ENCODE measurements at regions of chr9 and their contacts with region 1.

Region 1: GRCh38 chr9:21789541-21790037 is 12.8 kb upstream of the MTAP start:
- DNase-seq: peak; percentile 74
- H3K4me3 Mint-ChIP-seq: peak overlapping the region; percentile 65
- H3K27ac Mint-ChIP-seq: peak overlapping the region; percentile 75
- H3K4me1 Mint-ChIP-seq: no peaks in the 10 kb centered on the region
- H3K27me3 Mint-ChIP-seq: peaks cover 7% of the 10 kb centered on the region

Region 2: GRCh38 chr9:21210311-21210710 is 579.3 kb before region 1 on chr9:
- CTCF ChIA-PET with region 1: no interaction called
- intact Hi-C with region 1: loop called (anchors 1 kb)
- DNase-seq: no peak
- H3K4me3 Mint-ChIP-seq: no peak overlapping the region
- H3K27ac Mint-ChIP-seq: no peak overlapping the region
- H3K4me1 Mint-ChIP-seq: peaks cover 7% of the 10 kb centered on the region
- H3K27me3 Mint-ChIP-seq: peaks cover 5% of the 10 kb centered on the region

Region 3: DNA sequence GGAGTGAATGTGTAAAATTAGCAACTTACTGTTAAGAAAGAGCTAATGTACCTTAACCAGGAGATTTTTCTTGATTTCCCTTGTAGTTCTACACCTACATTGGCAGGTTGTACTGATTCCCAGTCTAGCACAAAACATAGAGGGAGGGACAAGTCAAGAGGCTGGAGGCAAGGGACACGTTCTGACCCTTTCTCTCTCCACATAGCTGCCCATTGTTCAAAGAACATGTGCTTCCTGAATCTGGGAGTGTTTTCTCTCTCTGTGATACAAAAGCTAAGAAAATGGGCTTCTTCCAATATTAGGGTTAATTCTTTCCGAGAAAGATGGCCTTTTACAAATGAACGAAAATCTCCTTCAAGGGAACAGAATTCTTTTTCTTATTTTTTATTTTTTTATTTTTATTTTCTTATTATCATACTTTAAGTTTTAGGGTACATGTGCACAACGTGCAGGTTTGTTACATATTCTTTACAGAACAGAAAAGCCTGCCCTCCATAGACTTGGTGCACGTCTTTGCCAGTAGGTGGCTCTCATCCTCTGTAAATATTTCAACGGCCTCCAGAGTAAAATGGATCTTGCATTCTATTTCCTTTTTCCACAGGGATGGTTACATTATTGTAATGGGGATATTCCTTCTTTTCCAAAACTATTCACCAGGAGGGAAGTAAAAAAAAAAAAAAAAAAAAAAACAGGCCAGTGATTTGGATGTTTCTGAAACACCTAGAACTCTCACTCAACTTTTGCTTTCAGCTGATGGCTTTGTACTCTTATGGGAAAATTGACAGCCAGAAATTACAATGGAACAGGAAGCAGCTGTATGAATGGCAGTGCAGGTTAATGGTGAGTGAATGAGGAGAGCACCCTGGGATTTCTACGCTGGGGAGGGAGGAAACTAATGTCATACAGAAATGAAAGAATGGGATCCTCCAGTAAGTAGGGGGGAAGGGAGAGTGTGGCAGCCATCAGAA is 471.3 kb before region 1 on chr9:
- CTCF ChIA-PET with region 1: interaction called, 3 read pairs
- intact Hi-C with region 1: loop called (anchors 1 kb)
- DNase-seq: peak; percentile 61
- H3K4me3 Mint-ChIP-seq: no peak overlapping the region
- H3K27ac Mint-ChIP-seq: no peak overlapping the region
- H3K4me1 Mint-ChIP-seq: peaks cover 4% of the 10 kb centered on the region
- H3K27me3 Mint-ChIP-seq: no peaks in the 10 kb centered on the region

Region 4: GRCh38 chr9:21434202-21435014 is 355.2 kb before region 1 on chr9:
- CTCF ChIA-PET with region 1: interaction called, 13 read pairs
- intact Hi-C with region 1: loop called (anchors 1 kb)
- DNase-seq: peak; percentile 72
- H3K4me3 Mint-ChIP-seq: no peak overlapping the region
- H3K27ac Mint-ChIP-seq: no peak overlapping the region
- H3K4me1 Mint-ChIP-seq: no peaks in the 10 kb centered on the region
- H3K27me3 Mint-ChIP-seq: peaks cover 9% of the 10 kb centered on the region

Region 5: GRCh38 chr9:21491742-21492141 is 297.8 kb before region 1 on chr9:
- CTCF ChIA-PET with region 1: interaction called, 9 read pairs
- intact Hi-C with region 1: loop called (anchors 1 kb)
- DNase-seq: no peak
- H3K4me3 Mint-ChIP-seq: no peak overlapping the region
- H3K27ac Mint-ChIP-seq: no peak overlapping the region
- H3K4me1 Mint-ChIP-seq: peaks cover 2% of the 10 kb centered on the region
- H3K27me3 Mint-ChIP-seq: no peaks in the 10 kb centered on the region

Region 6: DNA sequence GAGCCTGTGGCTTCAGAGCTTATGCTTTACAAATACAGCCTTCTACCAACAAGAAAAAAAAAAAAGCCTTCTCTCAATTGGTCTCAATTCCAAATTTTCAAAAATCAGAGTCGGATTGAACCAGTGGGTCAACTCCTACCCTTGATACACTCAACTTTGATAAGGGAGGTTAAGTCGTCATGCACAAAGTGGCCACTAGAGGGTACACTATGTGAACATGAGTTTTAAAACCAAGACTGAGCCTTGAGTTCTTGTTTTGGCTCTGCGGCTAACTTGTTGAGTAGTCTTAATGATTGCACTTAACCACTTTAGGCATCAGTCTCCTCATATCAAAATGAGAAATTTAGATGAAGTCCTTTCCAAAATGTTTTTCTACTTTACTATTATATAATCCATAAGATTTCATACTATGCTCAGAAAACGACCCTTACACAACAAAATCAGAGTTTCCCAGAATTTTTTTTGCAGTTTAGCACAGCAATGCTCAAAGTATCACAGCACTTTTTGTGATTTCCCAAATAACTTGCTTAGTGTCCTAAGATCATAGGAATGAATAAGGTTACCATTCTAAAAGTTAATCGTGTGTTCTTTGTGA is 80.0 kb before region 1 on chr9:
- CTCF ChIA-PET with region 1: interaction called, 19 read pairs
- intact Hi-C with region 1: loop called (anchors 1 kb)
- DNase-seq: peak; percentile 86
- H3K4me3 Mint-ChIP-seq: no peak overlapping the region
- H3K27ac Mint-ChIP-seq: no peak overlapping the region
- H3K4me1 Mint-ChIP-seq: peaks cover 14% of the 10 kb centered on the region
- H3K27me3 Mint-ChIP-seq: no peaks in the 10 kb centered on the region

Region 7: GRCh38 chr9:22037954-22038690 is 248.5 kb after region 1 on chr9:
- CTCF ChIA-PET with region 1: no interaction called
- intact Hi-C with region 1: no loop called
- DNase-seq: no peak
- H3K4me3 Mint-ChIP-seq: no peak overlapping the region
- H3K27ac Mint-ChIP-seq: no peak overlapping the region
- H3K4me1 Mint-ChIP-seq: peaks cover 9% of the 10 kb centered on the region
- H3K27me3 Mint-ChIP-seq: peaks cover 16% of the 10 kb centered on the region

Measured in activated naive CD4-positive, alpha-beta T cell treated with anti-CD3 and anti-CD28 coated beads for 36 hours (primary cell).